ENCODE measurements at regions of chr1 and their contacts with region 1.

Region 1: GRCh38 chr1:7667625-7668218 is 103.4 kb upstream of the VAMP3 start:
- DNase-seq: peak; percentile 74
- H3K27ac ChIP-seq: peak overlapping the region; percentile 29; the same call in 1 of the 2 replicates
- CTCF ChIP-seq: peak; percentile 97

Region 2: GRCh38 chr1:7680207-7680954 is 12.7 kb after region 1 on chr1:
- CTCF ChIA-PET with region 1: interaction called, 48 read pairs
- POLR2A ChIA-PET with region 1: no interaction called
- DNase-seq: peak; percentile 26
- H3K27ac ChIP-seq: no peak overlapping the region
- CTCF ChIP-seq: no peak

Region 3: DNA sequence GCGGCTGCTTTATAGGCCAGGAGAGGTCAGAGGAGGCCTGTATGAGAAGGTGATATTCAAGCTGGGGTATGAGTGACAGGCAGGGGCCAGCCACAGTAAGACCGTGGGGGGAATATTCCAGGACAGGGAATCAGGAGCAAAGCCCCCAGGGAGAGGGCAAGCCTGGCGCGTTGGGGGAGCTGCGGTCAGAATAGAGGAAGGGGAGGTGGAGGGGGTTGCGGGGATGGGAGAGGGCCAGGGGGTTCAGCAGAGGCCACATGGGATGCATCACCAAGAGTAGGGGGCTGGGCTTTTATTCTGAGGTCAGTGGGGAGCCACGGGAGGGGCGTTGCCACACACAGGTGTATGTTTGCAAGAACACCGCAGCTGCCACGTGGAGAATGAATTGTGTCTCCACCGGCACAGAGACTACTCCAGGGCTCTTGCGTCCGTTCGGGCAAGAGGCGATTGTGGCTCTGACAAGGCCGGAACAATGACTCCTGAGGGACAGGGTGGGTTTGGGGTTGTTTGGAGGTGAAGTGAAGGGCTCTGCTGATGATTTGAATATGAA is 18.7 kb after region 1 on chr1:
- CTCF ChIA-PET with region 1: interaction called, 48 read pairs
- POLR2A ChIA-PET with region 1: no interaction called
- DNase-seq: no peak
- H3K27ac ChIP-seq: no peak overlapping the region
- CTCF ChIP-seq: no peak

Region 4: DNA sequence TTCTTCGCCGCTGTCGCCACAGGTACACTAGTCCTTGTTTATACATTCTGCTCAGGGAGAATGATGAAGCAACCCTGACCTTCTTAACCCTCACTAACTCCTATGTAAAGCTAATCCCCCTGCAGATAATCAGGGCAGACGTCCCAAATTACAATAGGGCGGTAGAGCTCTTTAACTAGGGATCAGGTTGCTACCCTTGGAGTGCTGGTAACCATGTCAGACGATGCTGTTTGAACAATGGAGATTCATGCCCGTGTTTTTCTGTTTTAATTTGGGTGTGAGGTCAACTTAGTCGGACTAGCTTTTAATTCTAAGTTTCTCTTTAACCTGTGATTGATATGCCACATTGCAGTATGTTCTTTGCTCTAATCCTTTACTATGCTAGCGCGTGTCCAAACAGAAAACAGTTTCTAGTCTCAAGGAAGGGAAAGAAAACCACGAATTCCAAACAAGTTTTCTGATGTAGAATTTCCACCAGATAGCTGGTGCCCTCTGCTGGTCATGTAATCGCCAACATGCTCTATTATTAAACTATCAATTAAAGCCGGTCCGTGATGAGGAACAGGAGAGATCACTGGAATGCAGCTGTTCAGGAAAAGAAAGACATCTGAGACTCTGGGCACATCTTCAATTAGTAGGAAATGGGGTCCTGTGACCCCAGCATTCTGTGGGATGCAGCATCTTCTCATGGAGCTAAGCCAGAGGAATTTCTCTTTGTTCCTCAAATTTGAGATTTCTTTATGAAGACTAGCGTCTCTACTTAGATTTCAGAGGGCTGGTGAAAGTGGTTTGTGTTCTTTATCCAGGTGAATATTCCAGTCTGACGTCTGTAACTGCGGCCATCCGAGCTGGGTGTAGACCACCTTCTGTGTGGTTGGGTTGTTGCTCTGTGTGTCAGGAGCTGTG is 85.0 kb after region 1 on chr1:
- CTCF ChIA-PET with region 1: interaction called, 289 read pairs
- POLR2A ChIA-PET with region 1: no interaction called
- DNase-seq: peak; percentile 44
- H3K27ac ChIP-seq: no peak overlapping the region
- CTCF ChIP-seq: peak; percentile 84

Region 5: GRCh38 chr1:7768583-7768982 is 100.9 kb after region 1 on chr1:
- CTCF ChIA-PET with region 1: interaction called, 26 read pairs
- POLR2A ChIA-PET with region 1: no interaction called
- DNase-seq: no peak
- H3K27ac ChIP-seq: no peak overlapping the region
- CTCF ChIP-seq: no peak

Region 6: GRCh38 chr1:8154621-8155052 is 486.9 kb after region 1 on chr1:
- CTCF ChIA-PET with region 1: no interaction called
- POLR2A ChIA-PET with region 1: no interaction called
- DNase-seq: peak; percentile 68
- H3K27ac ChIP-seq: peak overlapping the region; percentile 54
- CTCF ChIP-seq: no peak

Measured in RWPE1 (cell line).